Caco-2 (cell line): ENCODE measurements at regions of chr2 and their contacts with region 1.

Region 1: GRCh38 chr2:221189431-221190067 is 382.6 kb downstream of the EPHA4 start:
- DNase-seq: peak; percentile 50 to 52
- H3K4me3 ChIP-seq: no peak overlapping the region
- H3K4me3 Mint-ChIP-seq: peak overlapping the region; percentile 5
- H3K27ac Mint-ChIP-seq: no peak overlapping the region
- H3K4me1 ChIP-seq: peaks cover 12% of the 10 kb centered on the region; the same call in 1 of the 2 replicates
- H3K4me1 Mint-ChIP-seq: peaks cover 17% of the 10 kb centered on the region
- H3K27me3 ChIP-seq: no peaks in the 10 kb centered on the region
- H3K27me3 Mint-ChIP-seq: no peaks in the 10 kb centered on the region
- CTCF ChIP-seq: no peak

Region 2: GRCh38 chr2:221203856-221204255 is 14.3 kb after region 1 on chr2:
- CTCF ChIA-PET with region 1: interaction called, 5 read pairs
- POLR2A ChIA-PET with region 1: interaction called, 9 read pairs
- intact Hi-C with region 1: loop called (anchors 1 kb)
- DNase-seq: no peak
- H3K4me3 ChIP-seq: no peak overlapping the region
- H3K4me3 Mint-ChIP-seq: no peak overlapping the region
- H3K27ac Mint-ChIP-seq: no peak overlapping the region
- H3K4me1 ChIP-seq: peaks cover 26% of the 10 kb centered on the region
- H3K4me1 Mint-ChIP-seq: peaks cover 9% of the 10 kb centered on the region
- H3K27me3 ChIP-seq: no peaks in the 10 kb centered on the region
- H3K27me3 Mint-ChIP-seq: no peaks in the 10 kb centered on the region
- CTCF ChIP-seq: no peak

Region 3: GRCh38 chr2:221289389-221289788 is 99.8 kb after region 1 on chr2:
- CTCF ChIA-PET with region 1: no interaction called
- POLR2A ChIA-PET with region 1: no interaction called
- intact Hi-C with region 1: loop called (anchors 5 kb)
- DNase-seq: no peak
- H3K4me3 ChIP-seq: no peak overlapping the region
- H3K4me3 Mint-ChIP-seq: no peak overlapping the region
- H3K27ac Mint-ChIP-seq: peak overlapping the region; percentile 58
- H3K4me1 ChIP-seq: peaks cover 38% of the 10 kb centered on the region
- H3K4me1 Mint-ChIP-seq: peaks cover 30% of the 10 kb centered on the region
- H3K27me3 ChIP-seq: no peaks in the 10 kb centered on the region
- H3K27me3 Mint-ChIP-seq: no peaks in the 10 kb centered on the region
- CTCF ChIP-seq: no peak

Region 4: DNA sequence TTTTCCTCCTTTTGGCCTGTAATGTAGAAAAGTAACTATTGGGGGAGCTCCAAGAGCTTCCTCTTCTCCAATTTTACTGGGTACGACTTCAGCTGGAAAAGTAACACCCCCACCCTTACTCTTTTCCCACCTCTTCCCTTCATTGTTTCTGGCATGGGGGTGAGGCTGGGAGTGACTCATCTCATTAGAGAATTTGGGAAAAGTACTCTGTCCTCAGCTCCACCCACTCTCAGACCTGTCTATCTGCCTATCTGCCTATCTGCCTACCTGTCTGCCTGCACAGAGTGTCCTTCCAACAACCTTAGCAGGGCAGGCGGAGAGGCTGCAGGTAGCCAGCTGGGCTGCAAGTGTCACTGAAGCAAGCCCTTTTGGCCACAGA is 288.9 kb after region 1 on chr2:
- CTCF ChIA-PET with region 1: no interaction called
- POLR2A ChIA-PET with region 1: no interaction called
- intact Hi-C with region 1: no loop called
- DNase-seq: peak in 1 of 2 experiments; percentile 25
- H3K4me3 ChIP-seq: no peak overlapping the region
- H3K4me3 Mint-ChIP-seq: no peak overlapping the region
- H3K27ac Mint-ChIP-seq: no peak overlapping the region
- H3K4me1 ChIP-seq: peaks cover 6% of the 10 kb centered on the region; the same call in 1 of the 2 replicates
- H3K4me1 Mint-ChIP-seq: peaks cover 6% of the 10 kb centered on the region
- H3K27me3 ChIP-seq: no peaks in the 10 kb centered on the region
- H3K27me3 Mint-ChIP-seq: no peaks in the 10 kb centered on the region
- CTCF ChIP-seq: peak; percentile 24 to 31

Region 5: GRCh38 chr2:221518201-221518929 is 328.8 kb after region 1 on chr2:
- CTCF ChIA-PET with region 1: no interaction called
- POLR2A ChIA-PET with region 1: no interaction called
- intact Hi-C with region 1: no loop called
- DNase-seq: peak in 1 of 2 experiments; percentile 50
- H3K4me3 ChIP-seq: no peak overlapping the region
- H3K4me3 Mint-ChIP-seq: no peak overlapping the region
- H3K27ac Mint-ChIP-seq: no peak overlapping the region
- H3K4me1 ChIP-seq: peaks cover 43% of the 10 kb centered on the region
- H3K4me1 Mint-ChIP-seq: peaks cover 8% of the 10 kb centered on the region
- H3K27me3 ChIP-seq: no peaks in the 10 kb centered on the region
- H3K27me3 Mint-ChIP-seq: no peaks in the 10 kb centered on the region
- CTCF ChIP-seq: no peak